ENCODE measurements at regions of chrX and their contacts with region 1.

Region 1: DNA sequence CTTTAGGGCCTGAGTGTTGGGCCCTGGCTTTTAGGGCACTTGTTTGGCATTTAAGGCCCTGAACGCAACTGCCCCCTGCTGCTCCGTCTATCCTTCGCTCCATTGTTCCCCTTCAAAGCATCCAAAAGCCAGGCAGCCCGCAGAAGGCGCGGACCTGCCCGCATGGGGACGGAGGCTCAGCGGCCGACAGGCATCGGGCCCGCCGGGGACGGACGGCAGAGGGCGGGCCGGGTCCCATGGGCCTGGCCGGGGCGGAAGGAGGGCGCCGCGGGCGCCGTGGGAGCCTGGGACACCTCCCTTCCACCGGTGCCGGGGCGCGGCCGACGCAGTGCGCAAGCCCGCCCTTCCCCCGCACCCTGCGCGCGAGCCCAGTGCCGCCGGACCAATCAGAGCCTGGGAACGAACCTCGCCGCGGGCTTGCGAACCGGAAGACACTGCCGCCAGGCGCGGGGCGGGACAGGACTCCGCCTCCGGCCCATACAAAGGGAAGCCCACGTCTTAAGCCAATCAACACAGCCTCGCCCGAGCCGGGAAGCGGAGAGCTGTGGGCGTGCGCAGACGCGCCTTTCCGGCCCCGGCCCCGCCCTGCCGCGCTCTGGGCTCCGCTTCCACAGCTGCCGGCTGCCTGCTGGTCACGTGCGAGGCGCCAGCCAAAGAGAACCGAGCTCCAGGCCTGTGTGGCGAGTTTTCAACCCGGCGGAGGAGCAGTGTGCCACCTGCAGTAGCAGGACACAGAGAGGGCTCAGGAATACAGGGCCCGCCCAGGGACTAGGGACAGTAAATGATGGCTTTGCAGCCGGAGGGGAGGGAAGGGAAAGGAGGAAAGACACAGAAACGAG is 2.1 kb upstream of the ARHGAP4 start:
- DNase-seq: peak; percentile 97
- H3K4me3 Mint-ChIP-seq: peak overlapping the region; percentile 91
- H3K27ac Mint-ChIP-seq: peak overlapping the region; percentile 98
- H3K4me1 Mint-ChIP-seq: peaks cover 21% of the 10 kb centered on the region
- H3K27me3 Mint-ChIP-seq: no peaks in the 10 kb centered on the region

Region 2: DNA sequence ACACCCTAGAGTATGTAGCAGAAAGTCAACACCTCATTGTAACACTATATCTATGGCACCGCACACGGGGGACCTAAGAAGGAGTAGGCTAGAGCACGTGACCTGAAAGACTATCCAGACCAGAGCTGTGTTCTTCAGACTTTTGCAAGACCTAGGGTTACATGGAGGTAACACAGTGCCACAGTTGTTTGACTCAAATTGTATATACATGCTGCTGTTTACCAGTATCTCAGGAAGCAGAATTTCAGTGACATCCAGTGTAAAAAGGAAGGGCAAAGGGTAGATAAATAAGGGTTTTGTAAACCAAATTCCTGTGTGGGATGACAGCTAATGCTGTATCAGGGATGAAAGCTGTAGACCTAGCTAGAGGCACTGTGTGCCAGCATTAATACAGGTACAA is 825.7 kb before region 1 on chrX:
- intact Hi-C with region 1: no loop called
- DNase-seq: no peak
- H3K4me3 Mint-ChIP-seq: no peak overlapping the region
- H3K27ac Mint-ChIP-seq: no peak overlapping the region
- H3K4me1 Mint-ChIP-seq: peaks cover 3% of the 10 kb centered on the region
- H3K27me3 Mint-ChIP-seq: no peaks in the 10 kb centered on the region

Region 3: DNA sequence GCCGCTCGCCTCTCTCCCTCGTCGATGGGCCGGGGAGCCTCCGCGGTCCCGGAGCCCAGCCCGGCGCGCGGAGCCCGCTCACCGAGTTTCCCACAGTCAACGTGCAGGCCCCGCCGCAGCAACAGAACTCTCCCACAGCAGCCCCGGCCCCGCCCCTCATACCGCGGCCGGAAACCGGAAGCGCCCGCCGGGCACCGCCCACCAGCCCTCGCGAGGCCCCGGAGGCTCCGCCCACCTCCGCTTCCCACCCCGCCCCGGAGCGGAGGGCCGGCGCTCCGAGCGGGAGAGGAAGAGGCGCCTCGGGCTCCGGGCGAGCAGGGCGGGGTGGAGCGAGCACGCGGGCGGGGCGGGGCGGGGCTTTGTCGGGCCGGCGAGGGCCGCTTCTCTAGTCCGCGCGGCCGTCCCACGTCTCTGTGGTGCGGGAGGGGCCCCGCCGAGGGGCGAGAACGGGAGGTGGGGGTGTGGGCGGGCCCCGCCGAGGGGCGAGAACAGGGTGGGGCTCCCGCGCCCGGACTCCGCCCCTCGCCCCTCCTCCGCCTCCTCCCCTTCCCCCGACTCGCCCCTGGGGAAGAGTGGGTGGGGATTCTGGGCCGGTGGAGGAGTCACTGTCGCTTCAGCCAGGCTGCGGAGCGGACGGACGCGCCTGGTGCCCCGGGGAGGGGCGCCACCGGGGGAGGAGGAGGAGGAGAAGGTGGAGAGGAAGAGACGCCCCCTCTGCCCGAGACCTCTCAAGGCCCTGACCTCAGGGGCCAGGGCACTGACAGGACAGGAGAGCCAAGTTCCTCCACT is 203.7 kb before region 1 on chrX and contains the starts of genes ABCD1 and BCAP31:
- intact Hi-C with region 1: loop called (anchors 5 kb)
- DNase-seq: peak; percentile 97
- H3K4me3 Mint-ChIP-seq: peak within 1 kb of the TSS; percentile 90
- H3K27ac Mint-ChIP-seq: peak within 1 kb of the TSS; percentile 89
- H3K4me1 Mint-ChIP-seq: peaks cover 14% of the 10 kb centered on the region
- H3K27me3 Mint-ChIP-seq: no peaks in the 10 kb centered on the region
- total RNA-seq, gene ABCD1: 6.6 and 7.7 TPM in 2 replicates
- total RNA-seq, gene BCAP31: 154 and 157 TPM in 2 replicates

Region 4: GRCh38 chrX:153794018-153794896 is 133.9 kb before region 1 on chrX and contains the starts of genes IDH3G and SSR4:
- intact Hi-C with region 1: loop called (anchors 2 kb)
- DNase-seq: peak; percentile 97
- H3K4me3 Mint-ChIP-seq: peak within 1 kb of the TSS; percentile 90
- H3K27ac Mint-ChIP-seq: peak within 1 kb of the TSS; percentile 93
- H3K4me1 Mint-ChIP-seq: peaks cover 11% of the 10 kb centered on the region
- H3K27me3 Mint-ChIP-seq: no peaks in the 10 kb centered on the region
- total RNA-seq, gene IDH3G: 70.2 and 78.8 TPM in 2 replicates
- total RNA-seq, gene SSR4: 265 and 277 TPM in 2 replicates

Region 5: DNA sequence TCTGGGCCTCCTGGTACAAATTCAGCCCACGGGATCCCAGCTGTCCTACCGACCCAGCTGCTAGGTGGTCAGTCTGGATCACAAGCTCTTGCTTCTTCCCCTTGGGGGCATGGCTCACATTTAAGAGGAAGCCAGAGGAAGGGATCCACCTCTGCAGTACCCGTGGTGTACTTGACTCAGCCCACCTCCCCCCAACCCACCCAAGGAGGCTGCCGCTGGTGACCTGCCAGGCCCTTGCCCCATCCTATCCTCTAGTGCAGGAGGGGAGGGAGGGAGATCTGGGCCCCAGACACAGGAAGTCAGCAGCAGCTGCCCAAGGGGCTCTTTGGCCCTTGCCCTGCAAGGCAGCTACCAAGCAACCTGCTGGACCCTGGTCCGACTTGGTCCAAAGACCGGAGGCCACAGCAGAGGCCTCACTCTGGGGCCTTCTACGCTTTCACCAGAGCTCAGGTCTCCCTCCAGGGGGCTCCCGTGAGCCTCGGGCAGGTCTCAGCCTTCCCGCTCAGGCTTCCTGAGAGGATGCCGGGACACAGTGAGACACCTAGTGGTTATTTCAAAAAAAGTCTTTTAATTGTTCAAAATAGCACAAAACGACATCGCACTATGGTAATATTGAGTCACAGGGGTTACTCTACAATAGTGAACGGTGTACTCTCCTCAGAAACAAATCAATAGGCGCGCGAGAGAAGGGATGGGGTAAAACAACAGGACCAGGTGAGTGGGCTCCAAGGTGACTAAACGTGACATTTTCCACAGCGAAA is 19.0 kb after region 1 on chrX:
- intact Hi-C with region 1: loop called (anchors 2 kb)
- DNase-seq: peak; percentile 93
- H3K4me3 Mint-ChIP-seq: peak overlapping the region; percentile 2
- H3K27ac Mint-ChIP-seq: peak overlapping the region; percentile 83
- H3K4me1 Mint-ChIP-seq: peaks cover 13% of the 10 kb centered on the region
- H3K27me3 Mint-ChIP-seq: no peaks in the 10 kb centered on the region

Region 6: DNA sequence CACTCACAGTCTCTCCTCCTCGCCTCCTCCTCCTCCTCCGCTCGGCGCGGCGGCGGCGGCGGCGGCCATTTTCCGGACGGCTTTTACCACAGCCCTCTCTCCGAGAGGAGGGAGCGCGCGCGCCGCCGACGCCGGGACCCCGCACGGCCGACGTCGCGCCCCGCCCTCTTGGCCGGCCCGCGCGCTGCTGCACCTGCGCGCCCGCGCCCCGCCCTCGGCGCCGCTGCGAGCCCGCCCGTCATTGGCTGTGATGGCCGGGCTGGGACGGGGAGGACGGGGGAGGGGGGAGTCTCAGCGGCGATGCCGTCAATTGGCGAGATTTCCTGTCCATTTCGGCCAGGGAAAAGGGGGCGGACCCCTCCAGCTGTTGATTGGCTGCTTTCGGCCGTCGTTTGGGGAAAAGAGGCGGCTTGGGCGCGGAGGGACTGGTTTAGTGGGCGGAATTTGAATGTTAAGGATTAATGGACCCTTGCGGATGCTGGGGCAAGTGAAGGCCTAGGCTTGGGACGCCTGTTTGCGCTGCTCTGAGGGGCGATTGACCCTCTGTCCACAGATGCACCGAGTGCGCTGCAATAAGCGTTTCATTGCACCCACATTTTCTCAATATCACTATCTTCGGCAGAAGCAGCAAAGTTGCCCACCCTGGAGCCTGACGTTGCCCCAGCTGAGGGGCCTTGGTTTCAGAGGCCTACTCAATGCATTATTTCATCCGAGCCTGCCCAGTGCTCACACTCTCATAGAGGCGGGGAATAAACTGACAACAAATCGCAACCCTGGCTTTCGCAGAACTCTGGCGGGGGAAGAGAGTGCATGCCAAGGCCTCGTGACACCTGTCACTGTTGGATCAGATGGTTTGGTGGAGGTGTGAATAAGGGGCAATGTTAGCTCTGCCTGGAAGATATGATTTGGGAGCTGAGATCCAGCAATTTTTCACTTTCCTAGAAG is 169.7 kb after region 1 on chrX and contains the start of gene MECP2:
- intact Hi-C with region 1: no loop called
- DNase-seq: peak; percentile 96
- H3K4me3 Mint-ChIP-seq: peak within 1 kb of the TSS; percentile 93
- H3K27ac Mint-ChIP-seq: peak within 1 kb of the TSS; percentile 99
- H3K4me1 Mint-ChIP-seq: peaks cover 44% of the 10 kb centered on the region
- H3K27me3 Mint-ChIP-seq: peaks cover 6% of the 10 kb centered on the region
- total RNA-seq, gene MECP2: 55.1 and 58.8 TPM in 2 replicates

Measured in activated CD4-positive, alpha-beta T cell treated with anti-CD3 and anti-CD28 coated beads, Interleukin-2, amount 10 ng/mL, durations not matched to agents 24 days and 14 days (primary cell).